GM23248 (cell line): ENCODE measurements at regions of chr6 and their contacts with region 1.

Region 1: DNA sequence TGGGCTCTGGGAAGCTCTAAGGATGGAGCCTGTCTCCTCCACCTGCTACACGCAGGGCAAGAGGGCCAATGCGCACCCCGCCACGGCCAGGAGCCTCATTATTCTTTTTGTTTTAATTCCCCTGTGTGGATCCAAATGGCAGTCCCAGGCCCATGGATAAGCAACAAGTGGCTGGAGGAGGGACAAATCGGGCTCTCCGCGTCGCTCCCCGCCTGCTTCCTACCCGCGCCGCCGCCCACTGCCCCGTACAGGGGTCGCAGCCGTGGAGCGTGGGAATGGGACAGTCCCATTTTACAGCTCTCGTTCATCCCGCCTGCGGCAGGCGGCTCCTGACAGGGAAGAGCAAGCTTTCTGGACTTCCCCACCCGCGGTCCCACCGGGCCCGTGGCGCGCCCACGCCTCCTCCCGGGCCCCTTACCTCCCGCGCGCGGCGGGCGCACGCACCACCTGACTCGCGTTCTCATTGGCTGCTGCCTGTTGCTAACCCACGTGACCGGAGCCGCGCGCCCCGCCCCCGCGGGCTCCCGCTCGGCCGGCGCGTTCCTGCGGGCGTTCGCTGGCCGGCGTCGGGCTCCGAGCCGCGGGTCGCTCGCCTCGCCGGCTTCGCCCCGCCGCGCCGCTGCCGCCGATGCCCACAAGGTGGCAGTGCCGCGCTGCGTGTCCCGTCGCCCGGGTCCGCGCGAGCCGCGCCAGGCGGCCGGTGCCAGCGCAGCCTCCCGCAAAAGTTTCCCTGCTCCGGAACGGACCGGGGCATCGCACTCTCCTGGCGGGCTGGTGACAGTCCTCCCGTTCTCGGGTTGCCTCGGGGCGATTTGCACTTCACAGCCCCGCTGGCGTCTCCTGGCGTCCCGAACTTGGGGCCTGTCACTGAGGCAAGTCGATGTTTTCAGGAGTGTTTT is 93.3 kb downstream of the CD83 start:
- DNase-seq: peak; percentile 96
- H3K4me3 ChIP-seq: peak overlapping the region; percentile 88
- H3K27ac ChIP-seq: peak overlapping the region; percentile 59
- H3K4me1 ChIP-seq: peaks cover 10% of the 10 kb centered on the region
- H3K27me3 ChIP-seq: no peaks in the 10 kb centered on the region

Region 2: GRCh38 chr6:15312500-15312899 is 1101.6 kb after region 1 on chr6:
- in situ Hi-C with region 1: no loop called
- DNase-seq: peak; percentile 49
- H3K4me3 ChIP-seq: no peak overlapping the region
- H3K27ac ChIP-seq: peak overlapping the region; percentile 45
- H3K4me1 ChIP-seq: peaks cover 51% of the 10 kb centered on the region
- H3K27me3 ChIP-seq: no peaks in the 10 kb centered on the region

Region 3: DNA sequence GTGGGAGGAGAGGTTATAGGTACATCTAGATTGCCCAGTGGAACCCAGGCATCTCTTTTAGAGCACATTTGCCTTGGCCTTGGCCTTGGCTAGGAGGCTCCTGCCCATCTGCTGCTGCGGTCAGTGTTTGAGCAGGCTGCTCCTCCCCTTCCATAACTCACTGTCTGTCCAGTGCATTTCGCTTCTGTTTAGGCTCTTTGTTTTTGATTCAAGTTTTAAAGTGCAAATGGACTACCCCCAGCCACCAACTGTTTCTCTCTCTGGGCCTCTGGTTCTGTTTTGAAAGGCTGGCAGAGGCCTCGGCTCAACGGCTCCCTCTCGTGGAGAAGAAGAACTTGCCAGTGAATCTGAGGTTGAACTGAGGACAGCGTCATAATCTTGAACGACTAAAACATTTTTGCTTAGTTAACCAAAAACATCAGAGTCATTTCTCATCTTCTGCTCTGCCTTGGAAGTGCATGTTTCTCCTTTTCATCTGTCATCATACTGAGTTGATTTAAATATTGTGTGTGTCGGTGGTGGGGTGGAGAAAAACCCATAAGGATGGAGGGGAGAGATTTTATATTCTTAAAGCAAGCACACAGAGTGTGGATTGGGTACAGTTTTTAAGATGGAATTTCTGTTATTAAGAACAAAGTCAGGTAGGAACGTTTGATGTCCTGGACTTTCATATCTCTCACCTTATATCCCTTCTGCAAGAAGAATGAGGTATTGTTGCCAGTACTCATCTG is 1280.5 kb after region 1 on chr6:
- in situ Hi-C with region 1: loop called (anchors 10 kb)
- DNase-seq: peak; percentile 87
- H3K4me3 ChIP-seq: no peak overlapping the region
- H3K27ac ChIP-seq: peak overlapping the region; percentile 21; the same call in 1 of the 2 replicates
- H3K4me1 ChIP-seq: peaks cover 4% of the 10 kb centered on the region; the same call in 1 of the 2 replicates
- H3K27me3 ChIP-seq: no peaks in the 10 kb centered on the region